GM10248 (cell line): ENCODE measurements at regions of chr1 and their contacts with region 1.

Region 1: DNA sequence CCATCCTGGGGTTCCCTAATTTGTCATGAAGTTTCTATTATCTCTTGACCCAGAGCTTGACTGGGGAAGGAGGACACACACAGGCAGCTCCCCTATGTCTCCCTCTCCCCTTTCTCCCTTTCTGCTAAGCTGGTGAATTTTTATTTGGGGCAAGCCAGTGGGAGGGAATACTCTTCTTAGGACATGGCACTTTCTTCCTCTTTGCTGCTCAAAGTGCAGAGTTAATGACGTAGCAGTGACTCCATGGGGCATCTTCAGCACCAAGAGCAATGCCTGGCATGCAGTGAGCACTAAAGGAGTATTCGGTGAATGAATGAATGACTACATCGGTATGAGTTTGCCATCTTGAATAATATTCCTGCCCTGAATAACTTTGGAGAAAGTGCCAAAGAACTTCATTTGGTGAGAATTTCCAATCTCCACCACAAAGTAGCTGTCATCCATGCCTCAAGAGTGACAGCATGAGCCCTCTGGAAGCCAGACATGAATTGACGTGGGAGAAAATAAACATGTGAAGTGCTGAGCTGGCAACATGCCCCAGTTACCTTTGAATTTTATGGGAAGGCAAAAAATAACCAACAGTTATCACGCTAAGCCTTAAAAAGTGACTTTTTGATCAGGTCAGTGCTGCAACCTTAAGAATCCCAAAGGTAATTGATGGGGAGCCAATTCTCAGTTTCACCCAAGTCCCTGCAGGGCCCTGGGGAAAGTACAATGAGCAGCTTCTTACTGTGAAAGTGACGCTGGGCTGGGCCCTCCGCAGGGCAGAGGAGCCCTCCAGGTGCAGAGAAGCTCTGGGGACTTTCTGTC is 22.1 kb upstream of the ATF3 start:
- DNase-seq: peak; percentile 65
- CTCF ChIP-seq: no peak

Region 2: GRCh38 chr1:212514056-212514614 is 72.3 kb before region 1 on chr1:
- CTCF ChIA-PET with region 1: no interaction called
- POLR2A ChIA-PET with region 1: no interaction called
- DNase-seq: no peak
- CTCF ChIP-seq: no peak

Region 3: DNA sequence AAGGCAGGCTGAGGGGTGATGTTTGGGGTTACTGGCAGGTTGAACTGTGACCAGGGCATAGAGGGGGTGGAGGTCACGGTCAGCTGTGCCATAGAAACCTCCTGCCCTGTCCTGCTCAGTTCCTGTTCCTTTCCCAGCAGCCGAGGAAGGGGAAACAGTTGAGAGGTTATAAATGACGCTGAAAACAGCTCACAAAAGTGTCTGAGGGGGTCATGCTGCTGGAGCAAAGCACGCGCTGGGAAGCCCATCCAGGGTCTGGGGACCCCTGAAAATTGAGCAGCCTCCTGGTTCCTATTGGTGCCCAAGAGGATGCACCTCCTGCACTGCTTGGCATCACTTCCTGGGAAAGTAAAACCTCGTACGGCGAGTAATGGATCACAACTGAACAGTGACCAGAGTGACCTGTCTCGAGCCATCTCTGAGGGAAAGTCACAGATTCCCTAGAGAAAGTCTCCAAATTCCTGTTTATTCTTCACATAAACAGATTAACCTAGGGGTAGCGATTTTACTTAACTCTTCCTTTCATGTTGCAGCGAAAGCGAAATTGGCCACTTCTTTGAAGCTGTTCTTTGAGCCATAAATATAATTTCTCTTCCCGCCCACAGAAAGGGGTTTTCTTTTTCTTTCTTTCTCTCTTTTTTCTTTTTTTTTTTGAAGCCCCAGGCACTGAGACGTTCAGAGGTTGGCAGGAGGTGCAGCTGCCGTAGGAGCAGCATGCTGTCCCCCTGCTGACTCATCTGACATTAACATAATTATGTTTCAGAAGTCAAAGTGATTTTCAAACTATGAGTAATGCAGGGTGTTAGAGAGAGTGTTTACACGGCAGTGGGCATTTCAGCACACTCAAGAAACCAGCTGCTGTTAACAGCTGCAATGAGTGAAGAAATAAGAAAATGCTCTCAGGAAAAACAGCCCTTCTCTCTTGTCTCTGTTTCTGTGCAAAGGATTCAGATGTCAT is 19.6 kb before region 1 on chr1:
- CTCF ChIA-PET with region 1: interaction called, 11 read pairs
- POLR2A ChIA-PET with region 1: no interaction called
- DNase-seq: peak; percentile 88
- CTCF ChIP-seq: no peak

Region 4: DNA sequence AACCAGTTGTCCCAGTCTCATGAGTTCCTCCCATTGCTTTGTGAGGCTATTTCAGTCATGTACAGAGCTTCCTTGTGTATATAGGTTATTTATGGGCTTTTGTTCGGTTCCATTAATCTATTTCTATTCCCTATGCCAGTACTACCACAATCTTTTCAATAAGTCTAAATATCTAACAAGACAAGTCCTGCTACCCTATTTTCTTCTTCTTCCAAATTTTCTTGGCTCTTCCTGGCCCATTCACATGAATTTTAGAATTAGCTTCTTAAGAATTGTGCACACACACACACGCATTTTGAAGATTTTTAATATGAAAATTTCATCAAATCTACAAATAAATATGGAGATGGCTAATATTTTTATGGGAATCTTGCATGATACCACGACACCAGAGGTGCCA is 11.7 kb before region 1 on chr1:
- CTCF ChIA-PET with region 1: interaction called, 11 read pairs
- POLR2A ChIA-PET with region 1: no interaction called
- DNase-seq: no peak
- CTCF ChIP-seq: no peak

Region 5: GRCh38 chr1:212683357-212683722 is 96.9 kb after region 1 on chr1:
- CTCF ChIA-PET with region 1: no interaction called
- POLR2A ChIA-PET with region 1: no interaction called
- DNase-seq: peak; percentile 82
- CTCF ChIP-seq: no peak